GM10248 (cell line): ENCODE measurements at regions of chr11 and their contacts with region 1.

Region 1: GRCh38 chr11:111422494-111423249 is 43.6 kb upstream of the POU2AF1 start:
- DNase-seq: peak; percentile 63
- CTCF ChIP-seq: peak; percentile 95

Region 2: GRCh38 chr11:111283945-111284481 is 138.7 kb before region 1 on chr11:
- CTCF ChIA-PET with region 1: interaction called, 386 read pairs
- POLR2A ChIA-PET with region 1: no interaction called
- DNase-seq: no peak
- CTCF ChIP-seq: no peak

Region 3: DNA sequence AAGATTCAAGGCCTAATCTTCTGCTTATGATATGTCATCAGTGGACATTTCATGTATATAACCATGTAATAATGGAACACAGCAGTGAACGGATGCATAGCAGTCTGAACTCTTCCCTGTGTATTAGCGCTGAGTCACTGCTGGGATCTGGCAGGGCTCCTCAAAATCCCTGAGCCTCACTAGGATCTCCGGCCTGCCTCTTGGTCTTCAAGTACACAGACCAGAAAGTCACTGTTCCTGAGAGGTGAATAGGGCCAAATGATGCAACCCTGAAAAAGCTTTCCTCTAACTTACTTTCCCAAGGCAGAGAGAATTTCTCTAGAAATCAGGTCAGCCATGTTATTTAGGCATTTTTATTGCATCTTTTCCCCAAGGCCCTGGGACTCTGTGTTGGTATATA is 78.6 kb before region 1 on chr11:
- CTCF ChIA-PET with region 1: interaction called, 636 read pairs
- POLR2A ChIA-PET with region 1: no interaction called
- DNase-seq: no peak
- CTCF ChIP-seq: no peak

Region 4: GRCh38 chr11:111378861-111379601 is 43.6 kb before region 1 on chr11 and contains the start of gene POU2AF1:
- CTCF ChIA-PET with region 1: interaction called, 636 read pairs
- POLR2A ChIA-PET with region 1: interaction called, 21 read pairs
- DNase-seq: peak; percentile 78
- CTCF ChIP-seq: no peak

Region 5: DNA sequence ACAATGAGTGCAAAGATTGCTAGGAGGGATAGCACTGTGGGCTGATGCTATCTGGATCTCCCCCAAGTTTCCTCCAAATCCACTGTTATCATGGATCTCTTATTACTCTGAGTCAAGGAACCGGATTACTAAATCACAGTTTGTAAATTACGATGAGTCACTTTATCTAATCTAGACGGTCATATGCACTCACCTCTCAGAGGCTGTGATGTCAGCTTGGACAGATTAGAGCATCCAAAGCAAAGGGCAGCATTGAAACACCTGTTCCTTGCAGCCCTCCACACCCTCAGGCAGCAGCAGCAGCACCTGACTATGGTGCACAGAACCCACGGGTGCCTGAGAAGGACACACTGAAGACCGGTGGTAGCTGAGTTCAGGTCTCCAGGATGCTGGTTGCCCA is 29.6 kb before region 1 on chr11:
- CTCF ChIA-PET with region 1: interaction called, 39 read pairs
- POLR2A ChIA-PET with region 1: interaction called, 3 read pairs
- DNase-seq: no peak
- CTCF ChIP-seq: no peak

Region 6: DNA sequence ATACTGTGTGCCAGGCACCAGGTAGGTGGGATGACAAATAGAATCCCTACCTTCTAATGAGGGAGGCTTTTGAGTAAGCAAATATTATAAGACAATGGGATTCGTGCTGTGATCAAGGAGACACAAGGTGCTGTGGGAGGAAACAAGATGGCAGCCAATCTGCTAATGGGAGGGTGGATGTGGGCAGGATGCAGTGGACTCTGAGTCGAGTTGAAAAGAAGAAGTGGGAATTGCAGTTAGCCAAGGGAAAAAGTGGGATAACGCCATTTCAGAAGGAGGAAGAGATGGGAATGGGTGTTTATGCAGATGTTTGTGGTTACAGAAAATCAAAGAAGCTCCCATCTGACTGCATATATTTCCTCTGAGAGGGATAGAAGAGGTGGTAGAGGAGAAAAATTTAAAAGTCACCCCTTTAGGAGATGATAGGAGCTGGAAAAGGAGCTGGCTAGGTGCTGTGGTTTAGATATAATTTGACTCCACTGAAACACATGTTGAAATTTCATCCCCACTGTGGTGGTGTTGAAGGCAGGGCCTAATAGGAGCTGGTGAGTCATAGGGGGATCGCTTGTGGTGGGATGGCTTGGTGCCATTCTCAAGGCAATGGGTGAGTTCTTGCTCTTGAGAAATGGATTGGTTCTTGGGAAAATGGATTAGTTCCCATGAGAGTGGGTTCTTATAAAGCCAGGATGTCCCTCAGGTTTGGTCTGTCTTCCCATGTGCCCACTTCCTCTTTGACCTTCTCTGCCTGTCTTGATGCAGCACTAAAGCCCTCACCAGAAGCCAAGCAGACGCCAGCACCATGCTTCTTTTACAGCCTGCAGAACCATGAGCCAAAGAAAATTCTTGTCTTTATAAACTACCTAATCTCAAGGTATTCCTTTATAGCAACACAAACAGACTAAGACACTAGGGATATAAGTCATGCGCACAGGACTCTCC is 13.6 kb before region 1 on chr11:
- CTCF ChIA-PET with region 1: interaction called, 155 read pairs
- POLR2A ChIA-PET with region 1: interaction called, 3 read pairs
- DNase-seq: no peak
- CTCF ChIP-seq: no peak

Region 7: GRCh38 chr11:111446404-111447111 is 23.9 kb after region 1 on chr11:
- CTCF ChIA-PET with region 1: interaction called, 75 read pairs
- POLR2A ChIA-PET with region 1: no interaction called
- DNase-seq: peak; percentile 89
- CTCF ChIP-seq: peak; percentile 93